ENCODE measurements at regions of chr5 and their contacts with region 1.

Region 1: DNA sequence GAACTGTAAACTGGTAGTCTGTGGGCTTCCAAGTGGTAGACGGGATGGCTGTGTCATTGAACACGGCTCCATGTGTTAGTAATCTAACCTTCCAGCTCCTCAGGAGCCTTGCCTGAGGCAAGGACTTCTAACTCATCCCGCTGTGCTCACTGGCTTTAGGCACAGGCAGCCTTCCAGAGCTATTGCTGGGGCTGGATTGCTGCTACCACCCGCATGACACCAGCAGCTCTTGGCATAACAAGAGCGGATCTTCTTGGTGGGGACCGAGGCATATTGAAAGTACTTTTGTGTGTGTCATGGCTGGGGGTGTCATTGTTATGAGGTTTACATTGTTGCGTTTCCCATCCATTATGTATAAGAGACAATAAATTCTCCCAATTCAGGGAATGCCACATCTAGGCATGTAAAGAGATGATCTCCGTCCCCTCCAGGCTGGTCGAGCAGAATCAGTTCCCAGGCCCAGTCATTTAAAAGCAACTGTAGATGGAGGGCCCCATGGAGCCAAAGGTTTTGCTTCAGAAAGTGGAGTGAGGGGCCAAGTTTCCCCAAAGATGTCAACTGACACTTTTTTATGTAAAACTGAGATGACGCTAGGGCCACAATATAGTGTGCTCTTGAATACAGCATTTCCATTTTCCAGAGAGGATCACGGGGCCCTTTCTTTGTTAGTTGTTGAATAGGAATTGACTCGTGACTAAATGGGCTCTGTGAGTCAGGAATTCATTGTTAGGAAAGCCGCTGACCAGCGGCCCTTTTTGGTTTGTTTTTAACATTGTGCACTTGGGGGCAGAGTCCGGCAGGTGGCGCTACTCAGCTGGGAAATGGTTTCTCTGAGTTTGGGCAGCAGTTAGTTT is 759.6 kb downstream of the TAF11L14 start:
- DNase-seq: peak; percentile 39 to 56 (median 46)
- ATAC-seq: peak; percentile 77
- H3K4me3 ChIP-seq: no peak overlapping the region
- H3K27ac ChIP-seq: no peak overlapping the region
- H3K4me1 ChIP-seq: no peaks in the 10 kb centered on the region
- H3K27me3 ChIP-seq: no peaks in the 10 kb centered on the region
- CTCF ChIP-seq: peak; percentile 65 to 83 (median 79)
- EP300 ChIP-seq: no peak
- POLR2A ChIP-seq: no peak
- RAD21 ChIP-seq: peak; percentile 74 to 86

Region 2: DNA sequence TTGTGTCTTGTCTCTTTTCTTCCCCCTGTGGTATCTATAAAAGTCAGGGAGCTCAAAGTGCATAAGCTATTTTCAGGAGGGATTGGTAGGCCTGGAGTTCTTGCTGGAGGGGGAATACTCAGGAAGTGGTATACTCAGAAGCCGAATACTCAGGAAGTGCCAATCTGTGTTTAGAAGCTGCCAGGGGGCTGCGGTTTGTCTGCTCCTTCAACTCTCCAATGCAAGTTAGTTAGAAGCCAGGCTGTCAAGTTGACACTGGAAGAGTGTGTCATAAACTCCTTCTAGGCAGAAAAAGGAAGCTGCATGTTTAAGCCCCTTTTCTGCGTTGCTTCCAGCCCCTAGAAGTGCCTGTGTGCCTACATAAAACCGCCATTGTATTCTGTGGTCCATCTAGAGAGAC is 393.1 kb before region 1 on chr5:
- CTCF ChIA-PET with region 1: no interaction called
- POLR2A ChIA-PET with region 1: no interaction called
- in situ Hi-C with region 1: no loop called
- intact Hi-C with region 1: no loop called
- DNase-seq: no peak
- ATAC-seq: no peak
- H3K4me3 ChIP-seq: no peak overlapping the region
- H3K27ac ChIP-seq: no peak overlapping the region
- H3K4me1 ChIP-seq: no peaks in the 10 kb centered on the region
- H3K27me3 ChIP-seq: no peaks in the 10 kb centered on the region
- CTCF ChIP-seq: no peak
- EP300 ChIP-seq: no peak
- POLR2A ChIP-seq: no peak
- RAD21 ChIP-seq: no peak

Region 3: GRCh38 chr5:18699681-18700080 is 305.9 kb after region 1 on chr5:
- CTCF ChIA-PET with region 1: interaction called, 3 read pairs
- POLR2A ChIA-PET with region 1: no interaction called
- in situ Hi-C with region 1: no loop called
- intact Hi-C with region 1: loop called (anchors 1 kb)
- DNase-seq: no peak
- ATAC-seq: no peak
- H3K4me3 ChIP-seq: no peak overlapping the region
- H3K27ac ChIP-seq: no peak overlapping the region
- H3K4me1 ChIP-seq: no peaks in the 10 kb centered on the region
- H3K27me3 ChIP-seq: no peaks in the 10 kb centered on the region
- CTCF ChIP-seq: no peak
- EP300 ChIP-seq: no peak
- POLR2A ChIP-seq: no peak
- RAD21 ChIP-seq: no peak

Measured in K562 (cell line).